ENCODE measurements at regions of chr22 and their contacts with region 1.

Region 1: GRCh38 chr22:16917144-16918003 is 90.6 kb downstream of the GAB4 start:
- DNase-seq: peak in 5 of 6 donors; percentile 28 to 71 (median 42)
- ATAC-seq: peak in 3 of 4 donors; percentile 64 to 86 (median 76)
- H3K4me3 ChIP-seq: no peak overlapping the region
- H3K27ac ChIP-seq: no peak overlapping the region
- H3K4me1 ChIP-seq: no peaks in the 10 kb centered on the region
- H3K27me3 ChIP-seq: peaks cover 0 to 10% (median 0%) of the 10 kb centered on the region in 4 donors
- CTCF ChIP-seq: peak; percentile 26 to 48 (median 34)

Region 2: DNA sequence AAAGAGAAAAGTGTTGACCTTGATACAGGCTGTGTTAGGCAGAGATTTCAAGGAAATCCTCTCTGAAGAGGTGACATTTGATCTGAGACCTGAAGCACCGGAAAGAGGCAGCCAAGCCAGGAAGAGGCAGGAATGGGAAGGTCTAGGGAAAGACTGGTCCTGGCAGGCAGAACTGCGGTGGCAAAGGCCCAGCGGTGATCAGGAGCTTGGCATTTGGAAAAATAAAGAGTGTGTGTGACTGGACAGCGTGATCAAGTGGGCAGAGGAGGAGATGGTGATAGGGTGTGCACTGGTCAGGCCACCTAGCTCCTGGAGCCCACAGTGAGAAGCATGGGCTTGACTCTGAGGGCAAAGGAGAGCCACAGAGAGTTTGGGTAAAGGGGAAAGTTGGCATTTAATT is 117.9 kb after region 1 on chr22:
- intact Hi-C with region 1: no loop called
- DNase-seq: no peak
- ATAC-seq: no peak
- H3K4me3 ChIP-seq: no peak overlapping the region
- H3K27ac ChIP-seq: no peak overlapping the region
- H3K4me1 ChIP-seq: no peaks in the 10 kb centered on the region
- H3K27me3 ChIP-seq: peaks cover 0 to 2% (median 0%) of the 10 kb centered on the region in 4 donors
- CTCF ChIP-seq: no peak

Region 3: GRCh38 chr22:17057959-17058814 is 140.8 kb after region 1 on chr22:
- intact Hi-C with region 1: loop called in 2 of 3 experiments (anchors 5 to 10 kb)
- DNase-seq: peak in 5 of 6 donors; percentile 34 to 68 (median 58)
- ATAC-seq: peak; percentile 79 to 99 (median 95)
- H3K4me3 ChIP-seq: no peak overlapping the region
- H3K27ac ChIP-seq: no peak overlapping the region
- H3K4me1 ChIP-seq: no peaks in the 10 kb centered on the region
- H3K27me3 ChIP-seq: no peaks in the 10 kb centered on the region
- CTCF ChIP-seq: peak; percentile 89 to 94 (median 92)